ENCODE measurements at regions of chr12 and their contacts with region 1.

Region 1: DNA sequence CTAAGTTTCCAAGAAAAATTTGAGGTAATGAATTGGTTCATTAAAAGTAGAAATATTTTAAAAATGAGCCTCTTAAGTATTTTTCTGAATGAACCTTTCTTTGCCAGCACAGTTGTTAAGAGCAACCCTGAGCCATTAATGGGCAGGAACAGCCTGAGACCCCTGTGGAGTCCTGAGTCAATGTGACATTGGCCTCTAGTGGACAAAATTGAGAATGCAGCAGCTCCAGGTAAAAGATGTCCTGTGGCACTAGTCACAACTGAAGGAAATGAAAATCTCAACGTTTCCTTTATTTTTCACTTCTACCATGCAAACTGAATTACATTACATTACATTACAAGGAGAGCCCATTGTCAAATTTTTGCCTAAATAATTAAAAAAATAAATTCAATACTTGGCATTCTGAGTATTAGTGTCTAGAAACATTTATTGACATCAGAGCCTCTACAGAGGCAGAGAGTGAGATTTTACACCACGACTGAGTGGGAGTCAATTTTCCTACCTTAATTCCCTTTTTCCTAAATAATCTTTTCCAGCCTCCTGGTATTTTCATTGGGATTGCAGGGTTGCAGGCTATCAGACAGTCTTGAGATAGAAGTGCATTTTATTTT is 135.7 kb downstream of the PPM1H start:
- DNase-seq: peak in 1 of 2 donors; percentile 57
- H3K4me3 ChIP-seq: no peak overlapping the region
- H3K27ac ChIP-seq: no peak overlapping the region
- H3K4me1 ChIP-seq: no peaks in the 10 kb centered on the region
- H3K27me3 ChIP-seq: no peaks in the 10 kb centered on the region
- CTCF ChIP-seq: peak; percentile 90 to 93

Region 2: GRCh38 chr12:62435303-62436163 is 363.7 kb before region 1 on chr12:
- intact Hi-C with region 1: loop called (anchors 5 kb)
- DNase-seq: peak; percentile 59 to 78
- H3K4me3 ChIP-seq: peak overlapping the region; percentile 49 to 61
- H3K27ac ChIP-seq: no peak overlapping the region
- H3K4me1 ChIP-seq: peaks cover 0 to 15% (median 8%) of the 10 kb centered on the region in 4 donors
- H3K27me3 ChIP-seq: no peaks in the 10 kb centered on the region
- CTCF ChIP-seq: peak; percentile 35 to 45

Region 3: DNA sequence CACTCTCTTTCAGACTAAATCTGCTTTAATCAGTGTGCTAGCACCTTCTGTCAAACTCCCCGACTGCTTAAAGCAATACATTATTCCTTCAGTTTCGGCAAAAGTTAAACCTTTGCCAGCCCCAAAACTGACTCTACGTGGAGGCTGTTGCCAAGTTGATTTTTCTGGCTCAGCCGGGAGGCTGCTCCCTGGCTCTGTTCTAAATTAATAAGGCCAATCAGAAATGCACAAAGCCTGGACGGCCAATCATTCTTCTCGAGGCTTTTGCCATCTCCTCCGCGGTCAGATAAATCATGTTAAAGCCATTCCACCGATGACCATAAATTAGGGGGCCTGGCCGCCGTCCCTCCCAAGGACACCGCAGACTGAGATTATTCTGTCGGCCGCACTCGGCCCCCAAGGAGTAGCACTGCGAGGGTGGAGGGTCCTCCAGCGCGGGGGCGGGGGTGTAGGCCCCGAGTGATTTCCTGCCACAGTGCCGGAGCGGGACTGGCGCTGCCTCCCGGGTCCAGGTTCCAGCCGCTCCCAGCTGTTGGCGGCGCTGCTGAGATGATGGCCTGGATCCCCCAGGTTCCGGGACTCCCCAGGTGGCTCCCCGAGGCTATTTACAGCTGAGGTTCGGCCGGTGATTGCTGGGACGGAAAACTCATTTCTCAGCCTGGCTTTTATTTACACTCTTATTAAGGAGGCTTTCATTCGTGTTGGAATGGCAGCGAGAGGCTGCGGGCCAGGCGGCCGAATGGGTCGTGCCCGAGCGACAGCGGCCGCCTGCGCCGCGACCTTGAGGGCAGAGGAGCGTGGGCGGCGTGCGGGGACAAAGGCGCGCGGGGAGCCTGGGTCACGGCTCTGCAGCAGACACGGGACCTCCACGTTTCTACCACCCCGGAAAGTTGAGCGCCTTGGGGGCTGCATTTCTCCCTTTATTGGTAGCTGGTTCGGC is 167.5 kb before region 1 on chr12:
- intact Hi-C with region 1: loop called (anchors 10 kb)
- DNase-seq: peak; percentile 63 to 83
- H3K4me3 ChIP-seq: peak overlapping the region; percentile 60 to 61
- H3K27ac ChIP-seq: peak overlapping the region; percentile 67 to 70
- H3K4me1 ChIP-seq: peaks cover 0 to 14% (median 7%) of the 10 kb centered on the region in 4 donors
- H3K27me3 ChIP-seq: no peaks in the 10 kb centered on the region
- CTCF ChIP-seq: peak in 1 of 2 experiments; percentile 29

Region 4: DNA sequence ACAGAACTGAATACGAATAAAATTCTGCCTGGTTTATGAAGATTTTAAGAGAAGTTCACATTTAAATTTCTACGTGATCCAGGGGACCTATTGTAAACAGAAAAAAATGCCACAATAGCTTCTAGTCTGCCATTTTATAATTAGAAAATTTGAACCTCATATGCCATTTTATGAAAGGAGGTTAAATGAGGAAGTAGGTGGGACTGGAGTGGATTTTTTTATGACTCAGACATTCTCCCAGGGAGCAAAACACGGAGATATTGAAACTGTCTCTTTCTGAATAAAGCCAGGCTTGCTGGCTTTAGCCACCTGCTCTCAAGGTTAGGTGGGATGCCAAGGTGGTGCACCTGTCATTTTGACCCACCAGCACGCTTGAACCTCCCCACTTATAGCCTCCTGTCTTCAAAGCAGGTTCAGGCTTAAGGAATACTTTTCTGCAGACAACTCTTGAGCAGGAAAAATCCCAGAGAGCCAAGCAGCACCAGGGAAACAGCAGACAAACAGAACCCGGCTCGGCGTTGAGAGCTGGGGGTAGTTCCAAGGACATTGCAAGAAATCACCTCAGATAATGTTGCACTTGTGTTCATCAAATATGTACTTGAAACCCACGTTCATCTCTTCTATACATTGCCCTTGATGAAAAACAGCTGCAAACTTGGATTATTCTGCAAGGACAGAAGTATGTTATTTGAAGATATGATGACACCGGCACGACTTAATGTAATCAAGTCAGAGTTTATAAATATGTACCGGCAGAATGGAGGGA is 68.0 kb before region 1 on chr12:
- intact Hi-C with region 1: no loop called
- DNase-seq: no peak
- H3K4me3 ChIP-seq: peak overlapping the region; percentile 26 to 31
- H3K27ac ChIP-seq: peak overlapping the region; percentile 61 to 73
- H3K4me1 ChIP-seq: peaks cover 0 to 47% (median 30%) of the 10 kb centered on the region in 4 donors
- H3K27me3 ChIP-seq: no peaks in the 10 kb centered on the region
- CTCF ChIP-seq: no peak

Region 5: DNA sequence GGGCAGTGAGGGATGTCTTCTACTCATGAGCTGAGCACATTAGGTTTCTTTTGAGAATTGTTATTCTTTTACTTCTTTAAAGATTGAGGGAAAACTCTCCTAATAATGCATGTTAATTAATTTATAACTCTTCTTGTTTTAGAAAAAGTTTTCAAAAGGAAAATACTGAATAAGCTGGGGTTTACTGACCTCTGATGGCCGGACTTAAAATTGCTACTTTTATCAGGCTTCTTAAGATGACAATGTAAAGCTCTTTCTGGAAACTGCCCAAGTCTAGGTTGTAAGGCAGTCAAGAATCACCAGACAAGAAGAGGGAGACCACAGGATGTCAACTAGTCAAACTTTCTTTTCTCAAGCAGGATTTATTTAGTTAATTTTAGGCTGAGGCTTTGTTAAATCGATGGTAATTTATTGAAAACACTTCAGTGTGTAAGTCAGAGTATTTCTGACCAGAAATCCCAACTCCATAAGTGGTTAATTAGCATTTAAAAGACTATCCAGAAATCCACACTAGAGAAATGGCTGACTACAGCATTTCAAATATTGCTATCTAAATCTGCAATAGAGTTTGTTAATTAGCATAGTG is 269.7 kb after region 1 on chr12:
- intact Hi-C with region 1: loop called (anchors 10 kb)
- DNase-seq: no peak
- H3K4me3 ChIP-seq: no peak overlapping the region
- H3K27ac ChIP-seq: no peak overlapping the region
- H3K4me1 ChIP-seq: no peaks in the 10 kb centered on the region
- H3K27me3 ChIP-seq: no peaks in the 10 kb centered on the region
- CTCF ChIP-seq: peak; percentile 44 to 50

Region 6: GRCh38 chr12:63387771-63388170 is 588.5 kb after region 1 on chr12:
- intact Hi-C with region 1: no loop called
- DNase-seq: no peak
- H3K4me3 ChIP-seq: no peak overlapping the region
- H3K27ac ChIP-seq: no peak overlapping the region
- H3K4me1 ChIP-seq: no peaks in the 10 kb centered on the region
- H3K27me3 ChIP-seq: no peaks in the 10 kb centered on the region
- CTCF ChIP-seq: no peak